Right ventricle myocardium inferior (tissue), 1 donor: ENCODE measurements at regions of chr10 and their contacts with region 1.

Region 1: DNA sequence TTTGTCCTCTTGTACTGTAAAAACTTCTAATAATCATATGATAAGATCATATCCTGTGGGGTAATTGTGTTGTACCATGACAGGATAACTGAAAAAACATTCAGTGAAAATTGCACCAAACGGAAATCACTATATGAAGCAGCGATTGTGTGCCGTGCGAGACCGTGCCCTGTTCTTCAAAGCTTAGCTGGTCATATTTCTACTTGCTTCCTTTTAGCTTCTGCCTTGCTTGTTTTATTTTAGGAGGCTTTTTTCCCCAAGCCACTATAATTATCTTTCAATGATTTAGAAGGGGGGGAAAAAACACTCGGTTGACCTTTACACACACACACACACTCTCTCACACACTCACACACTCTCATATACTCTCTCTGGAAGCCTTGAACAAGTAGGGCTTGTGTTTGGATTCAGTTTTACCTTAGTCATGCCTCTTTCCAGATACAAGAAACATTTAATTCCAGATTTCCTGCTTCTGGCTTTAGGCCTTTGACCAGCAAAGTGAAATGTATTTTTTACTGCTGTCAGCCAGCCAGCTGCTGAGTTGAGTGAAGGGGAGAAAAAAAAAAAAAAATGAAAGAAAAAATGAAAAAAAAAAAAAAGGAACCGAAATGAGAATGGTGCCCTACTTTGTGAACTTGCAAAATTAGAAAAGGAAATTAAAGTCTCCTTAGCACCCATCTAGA is 181.4 kb downstream of the ARID5B start:
- DNase-seq: no peak
- ATAC-seq: peak; percentile 50

Region 2: GRCh38 chr10:62048919-62049623 is 33.8 kb before region 1 on chr10:
- intact Hi-C with region 1: loop called (anchors 2 kb)
- DNase-seq: peak; percentile 84
- ATAC-seq: peak; percentile 93

Region 3: GRCh38 chr10:62057359-62057758 is 25.5 kb before region 1 on chr10:
- intact Hi-C with region 1: loop called (anchors 2 kb)
- DNase-seq: no peak
- ATAC-seq: peak; percentile 91